Spleen (tissue), 13 donors: ENCODE measurements at regions of chr14 and their contacts with region 1.

Region 1: DNA sequence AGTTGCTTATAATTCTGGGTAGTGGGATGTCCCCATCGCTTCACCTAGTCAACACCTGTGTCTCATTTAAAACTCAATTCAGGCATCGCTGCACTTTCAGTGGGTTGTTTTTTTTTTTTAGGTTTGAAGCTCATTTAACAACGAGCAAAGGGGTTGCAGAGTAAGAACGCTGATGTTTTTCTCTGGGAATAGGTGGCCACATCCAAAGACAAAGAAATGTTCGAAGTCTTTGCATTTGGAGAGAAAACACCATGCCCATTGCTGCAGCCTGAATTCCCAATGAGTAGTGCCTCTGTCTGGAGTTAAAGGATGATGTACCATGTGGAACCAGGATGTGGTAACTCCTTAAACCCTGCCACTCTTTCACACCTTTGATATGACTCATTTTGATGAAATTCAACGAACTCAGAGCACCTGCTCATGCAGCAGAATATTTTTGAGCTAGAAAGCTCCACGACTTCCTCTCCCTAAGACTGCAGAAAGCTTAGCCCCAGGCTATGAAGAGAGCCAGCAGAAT is 35.1 kb upstream of the BATF start:
- DNase-seq: no peak
- H3K4me3 ChIP-seq: no peak overlapping the region
- H3K27ac ChIP-seq: peak overlapping the region in 2 of 8 donors; percentile 35 to 49
- H3K4me1 ChIP-seq: peaks cover 8 to 30% (median 19%) of the 10 kb centered on the region in 6 donors
- H3K27me3 ChIP-seq: no peaks in the 10 kb centered on the region
- CTCF ChIP-seq: no peak
- POLR2A ChIP-seq: no peak

Region 2: GRCh38 chr14:75132382-75133086 is 354.7 kb before region 1 on chr14:
- intact Hi-C with region 1: loop called (anchors 10 kb)
- DNase-seq: no peak
- H3K4me3 ChIP-seq: no peak overlapping the region
- H3K27ac ChIP-seq: peak overlapping the region in 4 of 8 donors; percentile 41 to 56 (median 50)
- H3K4me1 ChIP-seq: peaks cover 3 to 48% (median 22%) of the 10 kb centered on the region in 6 donors
- H3K27me3 ChIP-seq: no peaks in the 10 kb centered on the region
- CTCF ChIP-seq: peak; percentile 69 to 94 (median 89)
- POLR2A ChIP-seq: no peak

Region 3: GRCh38 chr14:75560962-75561432 is 73.8 kb after region 1 on chr14:
- intact Hi-C with region 1: loop called (anchors 10 kb)
- DNase-seq: peak; percentile 87
- H3K4me3 ChIP-seq: no peak overlapping the region
- H3K27ac ChIP-seq: no peak overlapping the region
- H3K4me1 ChIP-seq: peaks cover 8 to 24% (median 13%) of the 10 kb centered on the region in 6 donors
- H3K27me3 ChIP-seq: no peaks in the 10 kb centered on the region
- CTCF ChIP-seq: peak; percentile 63 to 90 (median 79)
- POLR2A ChIP-seq: no peak

Region 4: DNA sequence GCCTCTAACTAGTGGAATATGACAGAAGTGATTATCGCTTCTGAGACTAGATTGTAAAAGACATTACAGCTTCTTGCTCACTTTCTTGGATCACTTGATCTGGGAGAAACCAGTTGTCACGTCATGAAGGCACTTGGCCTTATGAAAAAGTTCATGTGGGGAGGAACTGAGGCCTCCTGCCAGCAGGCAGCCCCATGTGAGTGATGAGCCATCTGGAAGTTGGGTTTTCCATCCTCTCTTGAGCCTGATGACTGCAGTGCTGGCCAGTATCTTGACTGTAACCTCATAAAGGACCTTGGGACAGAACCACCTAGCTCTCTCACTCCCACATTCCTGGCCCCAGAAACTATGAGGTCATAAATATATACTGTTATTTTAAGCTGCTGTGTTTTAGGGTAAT is 201.8 kb after region 1 on chr14:
- intact Hi-C with region 1: no loop called
- DNase-seq: no peak
- H3K4me3 ChIP-seq: no peak overlapping the region
- H3K27ac ChIP-seq: no peak overlapping the region
- H3K4me1 ChIP-seq: no peaks in the 10 kb centered on the region
- H3K27me3 ChIP-seq: no peaks in the 10 kb centered on the region
- CTCF ChIP-seq: no peak
- POLR2A ChIP-seq: no peak